ENCODE measurements at regions of chr14 and their contacts with region 1.

Region 1: DNA sequence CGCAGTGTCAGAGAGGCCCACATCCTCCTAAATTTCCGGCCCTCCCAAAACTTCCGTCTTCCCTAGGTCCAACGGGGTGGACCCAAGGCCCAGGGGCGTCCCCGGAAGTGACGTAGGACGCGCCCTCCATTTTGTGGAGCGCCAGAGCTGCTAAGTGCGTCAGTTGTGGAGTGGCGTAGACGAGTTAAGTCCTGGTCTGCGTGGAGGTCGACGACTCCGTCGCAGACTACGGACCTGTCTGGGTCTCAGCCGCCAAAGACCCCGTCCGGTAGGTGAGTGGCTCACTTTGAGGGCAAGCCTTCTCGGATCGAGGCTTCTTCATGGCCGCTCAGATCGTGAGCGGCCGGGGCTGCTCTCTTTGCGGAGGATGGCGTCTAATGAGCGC is at the start of gene SRSF5:
- DNase-seq: peak; percentile 96 to 97
- H3K4me3 ChIP-seq: peak within 1 kb of the TSS; percentile 85
- H3K4me3 Mint-ChIP-seq: peak within 1 kb of the TSS; percentile 97
- H3K27ac Mint-ChIP-seq: peak within 1 kb of the TSS; percentile 99
- H3K4me1 ChIP-seq: peaks cover 19% of the 10 kb centered on the region
- H3K4me1 Mint-ChIP-seq: peaks cover 19% of the 10 kb centered on the region
- H3K27me3 ChIP-seq: no peaks in the 10 kb centered on the region
- H3K27me3 Mint-ChIP-seq: no peaks in the 10 kb centered on the region
- CTCF ChIP-seq: no peak
- total RNA-seq, gene SRSF5: 264 and 310 TPM in 2 replicates

Region 2: DNA sequence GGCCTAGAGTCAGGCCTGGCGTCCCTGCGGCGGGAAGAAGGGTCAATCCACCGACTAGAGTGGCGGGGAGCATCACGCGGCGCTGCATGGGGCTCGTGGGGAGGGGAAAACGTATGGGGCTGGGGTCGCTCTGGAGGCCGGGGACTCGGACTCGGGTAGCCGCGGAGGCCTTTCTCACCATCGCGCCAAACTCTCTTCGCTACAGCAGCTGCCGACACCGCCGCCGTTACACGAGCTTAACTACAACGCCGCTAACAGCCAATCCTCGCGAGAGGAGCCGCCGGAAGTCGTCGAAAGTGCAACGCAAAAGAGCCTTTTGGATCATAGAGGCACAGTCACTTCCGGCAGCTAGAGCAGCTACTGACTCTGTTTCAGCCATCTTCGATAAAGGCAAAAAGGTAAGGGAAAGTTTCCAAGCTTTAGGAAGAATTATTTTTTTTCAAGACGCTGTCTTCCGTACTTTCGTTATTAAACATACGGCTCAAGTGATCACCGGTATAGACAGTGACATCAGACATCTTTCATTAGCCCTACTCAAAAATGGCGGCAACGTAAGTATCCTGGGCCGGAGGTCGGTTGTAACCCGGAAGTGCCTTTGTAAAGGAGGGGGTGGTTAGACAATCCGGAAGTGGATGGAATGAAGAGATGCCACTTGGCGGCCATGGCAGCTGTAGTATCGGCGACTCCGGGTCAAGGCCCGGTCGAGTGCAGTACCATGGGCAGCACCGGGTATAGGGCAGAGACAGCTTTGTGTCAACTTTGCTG is 368.7 kb before region 1 on chr14 and contains the starts of genes ERH and SLC39A9:
- CTCF ChIA-PET with region 1: no interaction called
- POLR2A ChIA-PET with region 1: interaction called, 3 read pairs
- intact Hi-C with region 1: loop called (anchors 2 kb)
- DNase-seq: peak; percentile 93 to 95
- H3K4me3 ChIP-seq: peak within 1 kb of the TSS; percentile 74
- H3K4me3 Mint-ChIP-seq: peak within 1 kb of the TSS; percentile 92
- H3K27ac Mint-ChIP-seq: peak within 1 kb of the TSS; percentile 98
- H3K4me1 ChIP-seq: peaks cover 3% of the 10 kb centered on the region; the same call in 1 of the 2 replicates
- H3K4me1 Mint-ChIP-seq: peaks cover 9% of the 10 kb centered on the region
- H3K27me3 ChIP-seq: no peaks in the 10 kb centered on the region
- H3K27me3 Mint-ChIP-seq: no peaks in the 10 kb centered on the region
- CTCF ChIP-seq: no peak
- total RNA-seq, gene ERH: 365 and 388 TPM in 2 replicates
- total RNA-seq, gene SLC39A9: 94.2 and 96.4 TPM in 2 replicates

Region 3: DNA sequence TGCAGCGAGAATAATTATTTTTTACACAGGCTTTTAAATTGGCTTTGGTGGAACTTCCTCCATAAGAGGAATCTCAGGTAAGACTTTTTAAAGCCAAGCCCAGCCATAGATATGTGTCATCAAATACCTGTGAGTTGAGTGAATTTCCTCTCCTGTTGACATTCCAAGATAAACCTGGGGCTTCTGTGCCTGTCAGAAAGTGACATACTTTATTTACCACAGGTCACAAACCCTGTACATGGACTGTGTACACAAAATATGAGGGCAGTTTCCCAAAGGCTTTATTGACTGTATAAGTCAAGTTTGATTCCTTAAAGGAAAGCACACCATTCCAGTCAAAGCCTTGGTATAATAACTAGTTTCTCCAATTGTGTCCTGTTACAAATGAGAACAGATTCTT is 25.9 kb before region 1 on chr14:
- CTCF ChIA-PET with region 1: interaction called, 3 read pairs
- POLR2A ChIA-PET with region 1: no interaction called
- intact Hi-C with region 1: loop called (anchors 1 kb)
- DNase-seq: peak; percentile 64 to 65
- H3K4me3 ChIP-seq: no peak overlapping the region
- H3K4me3 Mint-ChIP-seq: no peak overlapping the region
- H3K27ac Mint-ChIP-seq: peak overlapping the region; percentile 42
- H3K4me1 ChIP-seq: peaks cover 20% of the 10 kb centered on the region
- H3K4me1 Mint-ChIP-seq: peaks cover 8% of the 10 kb centered on the region
- H3K27me3 ChIP-seq: no peaks in the 10 kb centered on the region
- H3K27me3 Mint-ChIP-seq: no peaks in the 10 kb centered on the region
- CTCF ChIP-seq: no peak

Region 4: GRCh38 chr14:69755784-69756183 is 11.2 kb before region 1 on chr14:
- CTCF ChIA-PET with region 1: interaction called, 3 read pairs
- POLR2A ChIA-PET with region 1: interaction called, 14 read pairs
- intact Hi-C with region 1: no loop called
- DNase-seq: peak; percentile 28 to 50
- H3K4me3 ChIP-seq: no peak overlapping the region
- H3K4me3 Mint-ChIP-seq: no peak overlapping the region
- H3K27ac Mint-ChIP-seq: peak overlapping the region; percentile 76
- H3K4me1 ChIP-seq: peaks cover 26% of the 10 kb centered on the region
- H3K4me1 Mint-ChIP-seq: peaks cover 17% of the 10 kb centered on the region
- H3K27me3 ChIP-seq: no peaks in the 10 kb centered on the region
- H3K27me3 Mint-ChIP-seq: no peaks in the 10 kb centered on the region
- CTCF ChIP-seq: no peak

Region 5: GRCh38 chr14:69796797-69797500 is 30.0 kb after region 1 on chr14 and contains the start of gene SLC10A1:
- CTCF ChIA-PET with region 1: no interaction called
- POLR2A ChIA-PET with region 1: interaction called, 12 read pairs
- intact Hi-C with region 1: no loop called
- DNase-seq: peak; percentile 46 to 56
- H3K4me3 ChIP-seq: no peak within 1 kb of the TSS
- H3K4me3 Mint-ChIP-seq: peak within 1 kb of the TSS; percentile 16
- H3K27ac Mint-ChIP-seq: peak within 1 kb of the TSS; percentile 79
- H3K4me1 ChIP-seq: peaks cover 24% of the 10 kb centered on the region
- H3K4me1 Mint-ChIP-seq: peaks cover 21% of the 10 kb centered on the region
- H3K27me3 ChIP-seq: no peaks in the 10 kb centered on the region
- H3K27me3 Mint-ChIP-seq: no peaks in the 10 kb centered on the region
- CTCF ChIP-seq: no peak
- total RNA-seq, gene SLC10A1: 2.6 and 3.8 TPM in 2 replicates

Region 6: DNA sequence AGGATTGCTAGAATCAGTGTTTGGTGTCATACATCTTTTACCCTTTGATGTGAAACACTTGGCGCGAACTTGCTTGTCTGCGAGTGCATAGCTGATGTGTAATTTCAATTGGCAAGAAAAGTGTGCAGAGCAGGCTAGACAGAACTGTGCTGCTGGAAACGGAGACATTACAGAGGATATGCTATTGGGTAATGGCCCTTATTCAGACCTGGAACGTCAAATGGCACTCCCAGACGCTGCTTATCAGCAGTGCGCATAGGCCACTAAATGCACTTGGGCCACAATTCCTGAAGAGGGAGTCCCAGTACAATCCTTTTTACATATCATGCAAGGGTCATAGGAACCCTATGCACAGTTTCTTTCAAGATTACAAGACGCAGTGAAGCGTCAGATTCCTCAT is 45.7 kb after region 1 on chr14:
- CTCF ChIA-PET with region 1: no interaction called
- POLR2A ChIA-PET with region 1: interaction called, 3 read pairs
- intact Hi-C with region 1: loop called (anchors 1 kb)
- DNase-seq: peak; percentile 65 to 73
- H3K4me3 ChIP-seq: no peak overlapping the region
- H3K4me3 Mint-ChIP-seq: no peak overlapping the region
- H3K27ac Mint-ChIP-seq: no peak overlapping the region
- H3K4me1 ChIP-seq: peaks cover 70% of the 10 kb centered on the region
- H3K4me1 Mint-ChIP-seq: peaks cover 26% of the 10 kb centered on the region
- H3K27me3 ChIP-seq: no peaks in the 10 kb centered on the region
- H3K27me3 Mint-ChIP-seq: no peaks in the 10 kb centered on the region
- CTCF ChIP-seq: peak; percentile 24 to 38